ENCODE measurements at regions of chr19 and their contacts with region 1.

Region 1: GRCh38 chr19:49443366-49444099 is 2.2 kb upstream of the SLC17A7 start:
- DNase-seq: peak; percentile 94
- ATAC-seq: peak; percentile 85
- H3K4me3 Mint-ChIP-seq: peak overlapping the region; percentile 86
- H3K27ac Mint-ChIP-seq: peak overlapping the region; percentile 90
- H3K4me1 Mint-ChIP-seq: peaks cover 39% of the 10 kb centered on the region
- H3K27me3 Mint-ChIP-seq: peaks cover 34% of the 10 kb centered on the region
- CTCF ChIP-seq: peak; percentile 77

Region 2: GRCh38 chr19:49133621-49134454 is 309.7 kb before region 1 on chr19:
- CTCF ChIA-PET with region 1: no interaction called
- POLR2A ChIA-PET with region 1: no interaction called
- intact Hi-C with region 1: no loop called
- DNase-seq: no peak
- ATAC-seq: peak; percentile 70
- H3K4me3 Mint-ChIP-seq: peak overlapping the region; percentile 68
- H3K27ac Mint-ChIP-seq: no peak overlapping the region
- H3K4me1 Mint-ChIP-seq: peaks cover 12% of the 10 kb centered on the region
- H3K27me3 Mint-ChIP-seq: peaks cover 35% of the 10 kb centered on the region
- CTCF ChIP-seq: no peak

Region 3: GRCh38 chr19:49301165-49301865 is 142.2 kb before region 1 on chr19:
- CTCF ChIA-PET with region 1: interaction called, 7 read pairs
- POLR2A ChIA-PET with region 1: interaction called, 7 read pairs
- intact Hi-C with region 1: loop called (anchors 1 kb)
- DNase-seq: peak; percentile 81
- ATAC-seq: peak; percentile 99
- H3K4me3 Mint-ChIP-seq: peak overlapping the region; percentile 64
- H3K27ac Mint-ChIP-seq: peak overlapping the region; percentile 7
- H3K4me1 Mint-ChIP-seq: peaks cover 21% of the 10 kb centered on the region
- H3K27me3 Mint-ChIP-seq: no peaks in the 10 kb centered on the region
- CTCF ChIP-seq: no peak

Region 4: DNA sequence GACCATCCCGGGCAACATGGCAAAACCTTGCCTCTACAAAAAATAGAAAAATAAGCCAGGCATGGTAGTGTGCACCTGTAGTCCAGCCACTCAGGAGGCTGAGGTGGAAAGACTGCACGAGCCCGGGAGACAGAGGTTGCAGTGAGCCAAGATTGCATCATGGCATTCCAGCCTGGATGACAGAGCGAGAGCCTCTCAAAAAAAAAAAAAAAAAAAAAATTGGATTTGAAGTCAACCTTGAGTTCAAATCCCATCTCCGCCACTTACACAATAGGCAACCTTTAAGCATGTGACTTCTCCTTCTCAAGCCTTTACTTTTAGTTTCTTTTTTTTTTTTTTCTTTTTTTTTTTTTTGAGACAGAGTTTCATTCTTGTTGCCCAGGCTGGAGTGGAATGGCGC is 43.5 kb before region 1 on chr19:
- CTCF ChIA-PET with region 1: no interaction called
- POLR2A ChIA-PET with region 1: no interaction called
- intact Hi-C with region 1: no loop called
- DNase-seq: no peak
- ATAC-seq: no peak
- H3K4me3 Mint-ChIP-seq: no peak overlapping the region
- H3K27ac Mint-ChIP-seq: no peak overlapping the region
- H3K4me1 Mint-ChIP-seq: peaks cover 14% of the 10 kb centered on the region
- H3K27me3 Mint-ChIP-seq: no peaks in the 10 kb centered on the region
- CTCF ChIP-seq: no peak

Region 5: GRCh38 chr19:49422407-49423070 is 21.0 kb before region 1 on chr19:
- CTCF ChIA-PET with region 1: no interaction called
- POLR2A ChIA-PET with region 1: no interaction called
- intact Hi-C with region 1: loop called (anchors 2 kb)
- DNase-seq: no peak
- ATAC-seq: peak; percentile 46
- H3K4me3 Mint-ChIP-seq: peak overlapping the region; percentile 77
- H3K27ac Mint-ChIP-seq: no peak overlapping the region
- H3K4me1 Mint-ChIP-seq: peaks cover 57% of the 10 kb centered on the region
- H3K27me3 Mint-ChIP-seq: peaks cover 83% of the 10 kb centered on the region
- CTCF ChIP-seq: no peak

Region 6: DNA sequence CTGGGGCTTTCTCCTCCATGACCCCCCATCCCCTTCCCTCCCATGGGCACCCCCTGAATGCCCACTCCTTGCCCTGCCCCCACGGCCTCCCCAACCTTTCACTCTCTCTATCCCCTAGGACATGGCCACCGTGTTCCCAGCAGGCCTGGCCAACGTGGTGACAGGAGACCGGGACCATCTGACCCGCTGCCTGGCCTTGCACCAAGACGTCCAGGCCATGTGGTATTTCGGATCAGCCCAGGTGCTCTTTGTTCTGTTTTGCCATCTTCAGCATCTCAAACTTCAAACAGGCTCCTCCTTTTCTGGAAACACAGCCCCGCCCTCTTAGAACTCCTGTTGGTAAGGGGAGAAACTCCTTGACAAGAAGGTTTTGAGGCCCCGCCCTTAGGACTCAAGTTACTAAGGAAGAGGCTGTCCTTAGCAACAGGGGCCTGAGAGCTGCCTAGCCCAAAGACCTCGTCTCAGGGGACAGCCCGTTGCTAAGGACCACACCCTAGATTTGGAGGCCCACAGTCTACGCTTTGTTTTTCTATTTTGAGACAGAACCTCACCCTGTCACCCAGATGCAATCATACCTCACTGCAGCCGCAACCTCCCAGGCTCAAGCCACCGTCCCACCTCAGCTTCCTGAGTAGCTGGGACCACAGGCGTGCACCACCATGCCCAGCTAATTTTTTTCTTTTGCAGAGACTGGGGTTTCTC is 25.4 kb after region 1 on chr19:
- CTCF ChIA-PET with region 1: interaction called, 12 read pairs
- POLR2A ChIA-PET with region 1: interaction called, 193 read pairs
- intact Hi-C with region 1: loop called (anchors 1 kb)
- DNase-seq: peak; percentile 72
- ATAC-seq: peak; percentile 76
- H3K4me3 Mint-ChIP-seq: peak overlapping the region; percentile 61
- H3K27ac Mint-ChIP-seq: peak overlapping the region; percentile 97
- H3K4me1 Mint-ChIP-seq: peaks cover 46% of the 10 kb centered on the region
- H3K27me3 Mint-ChIP-seq: no peaks in the 10 kb centered on the region
- CTCF ChIP-seq: no peak

Region 7: GRCh38 chr19:49869441-49870176 is 426.1 kb after region 1 on chr19:
- CTCF ChIA-PET with region 1: no interaction called
- POLR2A ChIA-PET with region 1: interaction called, 10 read pairs
- intact Hi-C with region 1: no loop called
- DNase-seq: peak; percentile 82
- ATAC-seq: peak; percentile 80
- H3K4me3 Mint-ChIP-seq: no peak overlapping the region
- H3K27ac Mint-ChIP-seq: no peak overlapping the region
- H3K4me1 Mint-ChIP-seq: peaks cover 39% of the 10 kb centered on the region
- H3K27me3 Mint-ChIP-seq: no peaks in the 10 kb centered on the region
- CTCF ChIP-seq: no peak